ENCODE measurements at regions of chr3 and their contacts with region 1.

Region 1: GRCh38 chr3:184679056-184679816 is 32.6 kb downstream of the MAGEF1 start:
- DNase-seq: no peak
- H3K4me3 ChIP-seq: no peak overlapping the region
- CTCF ChIP-seq: no peak

Region 2: DNA sequence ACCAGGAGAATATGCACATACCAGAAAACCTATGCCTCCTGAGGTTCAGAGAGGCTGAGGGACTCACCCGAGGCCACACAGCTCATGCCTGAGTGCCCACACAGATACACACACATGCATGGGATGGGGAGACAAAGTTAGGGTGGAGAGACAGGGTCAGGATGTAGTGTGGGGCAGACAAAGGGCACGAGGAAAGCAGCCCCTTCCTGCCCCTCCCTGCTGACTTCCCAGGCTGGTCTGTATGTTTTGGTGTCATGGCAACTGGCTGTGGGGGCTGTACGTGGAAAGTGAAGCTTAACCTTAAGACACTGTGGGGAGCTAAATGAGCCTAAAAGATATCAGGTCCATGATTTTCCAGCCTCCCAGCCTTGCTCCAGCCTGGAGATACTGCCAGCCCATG is 59.9 kb before region 1 on chr3:
- in situ Hi-C with region 1: loop called (anchors 10 kb)
- DNase-seq: no peak
- H3K4me3 ChIP-seq: no peak overlapping the region
- CTCF ChIP-seq: no peak

Region 3: DNA sequence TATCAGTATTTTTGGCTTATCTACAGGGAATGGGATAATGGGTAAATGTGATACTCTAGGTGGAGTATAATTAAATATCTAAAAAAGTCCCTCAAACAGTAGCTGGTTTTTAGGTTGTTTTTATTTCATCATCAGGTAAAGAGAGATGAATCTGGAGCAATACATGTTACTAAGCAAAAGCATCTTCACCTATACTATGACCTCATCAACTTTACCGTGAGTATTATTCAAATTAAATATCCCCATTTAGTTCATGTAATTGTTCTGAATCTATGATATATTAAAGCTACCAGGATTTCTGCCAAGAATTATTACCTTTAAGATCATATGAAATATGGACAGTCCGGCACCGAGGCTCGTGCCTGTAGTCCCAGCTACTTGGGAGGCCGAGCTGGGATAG is 180.6 kb after region 1 on chr3:
- in situ Hi-C with region 1: no loop called
- DNase-seq: no peak
- H3K4me3 ChIP-seq: no peak overlapping the region
- CTCF ChIP-seq: no peak

Region 4: DNA sequence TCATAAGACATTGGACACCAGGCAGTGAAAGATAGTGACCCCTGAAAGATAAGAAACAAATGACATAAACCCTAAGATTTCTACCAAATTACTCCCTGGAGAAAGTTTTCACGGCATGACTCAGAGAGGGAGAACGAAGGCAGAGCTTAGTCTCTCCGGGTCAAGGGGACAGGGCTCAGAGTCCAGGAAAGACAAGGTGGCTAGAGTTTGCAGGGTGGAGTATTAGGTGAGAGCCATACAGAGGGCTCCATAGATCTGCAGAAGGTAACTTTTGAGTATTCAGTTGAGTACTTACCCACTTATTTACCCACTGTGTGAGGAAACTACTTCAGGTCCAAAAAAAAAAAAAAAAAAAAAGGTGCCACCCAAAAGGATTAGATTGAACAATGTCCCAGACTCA is 330.4 kb after region 1 on chr3:
- in situ Hi-C with region 1: no loop called
- DNase-seq: no peak
- H3K4me3 ChIP-seq: no peak overlapping the region
- CTCF ChIP-seq: no peak

Measured in astrocyte of the cerebellum (primary cell).